HepG2 (cell line): ENCODE measurements at regions of chrX and their contacts with region 1.

Region 1: DNA sequence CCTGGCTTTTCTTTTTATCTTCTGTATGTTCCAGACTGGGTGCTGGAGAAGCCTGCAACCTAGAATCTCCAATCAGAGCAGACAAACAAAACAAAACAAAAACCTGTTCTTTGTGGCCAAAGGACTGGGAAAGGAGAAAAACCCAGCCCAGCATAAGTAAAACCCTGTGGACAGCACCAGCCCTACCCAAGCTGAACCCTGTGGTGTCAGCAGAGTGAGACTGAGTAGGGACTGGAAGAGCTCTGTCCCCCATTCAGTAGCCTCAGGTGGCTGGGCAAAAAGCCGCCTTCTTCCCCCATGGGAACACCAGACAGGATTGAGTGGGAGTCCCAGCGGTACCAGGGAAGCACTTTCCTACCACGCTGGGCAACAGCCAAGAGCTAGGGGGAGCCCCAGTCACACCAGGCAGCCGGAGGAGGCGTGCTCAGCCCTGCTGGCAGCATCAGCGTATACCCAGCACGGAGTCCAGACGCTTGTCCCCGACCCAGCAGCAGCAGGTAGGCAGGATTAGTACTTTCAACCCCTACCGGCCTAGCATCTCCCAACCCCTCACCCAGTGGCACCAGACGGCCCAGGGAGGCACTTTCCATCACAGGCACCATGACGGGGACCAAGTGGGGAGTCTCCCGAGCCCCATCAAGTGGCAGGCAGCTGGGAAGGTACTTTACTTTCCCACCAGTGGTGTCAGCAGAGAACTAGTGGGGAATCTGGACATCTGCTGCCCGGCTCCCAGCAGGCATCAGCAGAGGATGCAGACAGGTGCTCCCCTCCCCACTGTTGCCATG is 8.6 kb upstream of the JADE3 start:
- DNase-seq: peak; percentile 69
- ATAC-seq: peak; percentile 100
- H3K4me3 ChIP-seq: peak overlapping the region; percentile 56 to 77 (median 59); a peak in 5 of 6 replicates
- H3K27ac ChIP-seq: no peak overlapping the region
- H3K4me1 ChIP-seq: 0 out of 2 replicates have a peak, but pooled peaks cover 5% of the 10 kb centered on the region
- H3K27me3 ChIP-seq: no peaks in the 10 kb centered on the region
- CTCF ChIP-seq: peak; percentile 92
- EP300 ChIP-seq: no peak
- POLR2A ChIP-seq: no peak
- RAD21 ChIP-seq: peak; percentile 80

Region 2: DNA sequence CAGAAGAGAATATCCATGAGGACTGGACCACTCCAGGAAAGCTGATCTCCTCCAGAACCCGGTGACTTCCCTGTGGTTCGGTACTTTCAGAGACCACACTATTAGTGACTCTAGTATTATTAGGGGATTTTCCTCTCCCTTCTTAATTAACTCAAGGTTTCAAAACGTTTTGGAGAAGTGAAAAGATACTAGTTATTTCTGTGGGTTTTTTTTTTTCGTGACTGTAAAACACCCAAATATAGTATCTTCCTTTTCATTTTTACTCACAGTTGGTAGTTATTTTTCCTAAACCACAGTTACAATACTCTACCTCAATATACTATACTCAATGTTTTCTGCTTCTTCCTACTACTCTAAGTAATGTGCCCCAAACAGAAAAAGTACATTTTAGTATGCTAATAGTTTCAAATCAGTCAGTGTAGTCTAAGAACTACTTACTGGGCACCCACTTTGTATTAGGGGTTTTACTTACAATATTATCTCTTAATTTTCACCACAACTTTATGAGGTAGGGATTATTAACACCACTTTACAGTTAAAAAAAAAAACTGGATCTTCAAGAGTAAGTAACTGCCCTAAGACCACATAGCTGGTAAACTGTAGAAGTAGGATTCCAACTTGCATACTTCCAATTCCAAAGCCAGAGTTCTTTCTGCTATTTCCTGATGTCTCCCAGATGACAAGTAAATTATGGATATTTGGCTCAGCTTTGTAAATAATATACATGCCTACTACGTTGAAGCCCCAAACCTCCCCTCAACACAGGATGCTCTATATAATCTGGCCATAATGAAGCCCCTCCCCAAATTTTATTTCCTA is 189.8 kb before region 1 on chrX:
- CTCF ChIA-PET with region 1: no interaction called
- POLR2A ChIA-PET with region 1: no interaction called
- in situ Hi-C with region 1: no loop called
- intact Hi-C with region 1: no loop called
- DNase-seq: no peak
- ATAC-seq: no peak
- H3K4me3 ChIP-seq: no peak overlapping the region
- H3K27ac ChIP-seq: no peak overlapping the region
- H3K4me1 ChIP-seq: no peaks in the 10 kb centered on the region
- H3K27me3 ChIP-seq: no peaks in the 10 kb centered on the region
- CTCF ChIP-seq: no peak
- EP300 ChIP-seq: no peak
- POLR2A ChIP-seq: no peak
- RAD21 ChIP-seq: no peak

Region 3: GRCh38 chrX:46796574-46797191 is 107.0 kb before region 1 on chrX:
- CTCF ChIA-PET with region 1: no interaction called
- POLR2A ChIA-PET with region 1: no interaction called
- in situ Hi-C with region 1: no loop called
- intact Hi-C with region 1: no loop called
- DNase-seq: peak; percentile 54
- ATAC-seq: peak; percentile 85
- H3K4me3 ChIP-seq: no peak overlapping the region
- H3K27ac ChIP-seq: no peak overlapping the region
- H3K4me1 ChIP-seq: peaks cover 22% of the 10 kb centered on the region
- H3K27me3 ChIP-seq: no peaks in the 10 kb centered on the region
- CTCF ChIP-seq: peak; percentile 78
- EP300 ChIP-seq: no peak
- POLR2A ChIP-seq: no peak
- RAD21 ChIP-seq: peak; percentile 56

Region 4: DNA sequence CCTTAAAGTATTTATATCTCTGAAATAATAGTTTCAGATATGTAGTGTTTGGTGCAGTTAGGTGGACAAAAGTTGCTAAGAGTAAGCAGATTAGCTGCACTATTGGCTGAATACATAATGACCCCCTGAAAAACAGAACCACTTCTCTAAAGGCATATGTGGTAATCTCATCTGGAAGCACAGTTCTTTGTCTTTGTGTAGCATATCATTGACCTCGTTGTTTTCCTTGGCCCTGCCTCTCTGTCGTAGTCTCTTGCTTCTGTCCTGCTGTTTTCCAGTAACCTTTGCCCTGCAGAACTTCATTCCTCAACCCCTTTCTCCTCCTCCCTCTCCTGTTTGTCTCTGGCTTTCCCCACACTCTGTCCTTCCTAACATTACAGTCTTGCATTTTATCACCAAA is 49.9 kb after region 1 on chrX:
- CTCF ChIA-PET with region 1: no interaction called
- POLR2A ChIA-PET with region 1: no interaction called
- in situ Hi-C with region 1: no loop called
- intact Hi-C with region 1: loop called (anchors 1 kb)
- DNase-seq: peak; percentile 75
- ATAC-seq: peak; percentile 82
- H3K4me3 ChIP-seq: peak overlapping the region in 1 of 3 experiments; percentile 42; a peak in 2 of 6 replicates
- H3K27ac ChIP-seq: peak overlapping the region; percentile 78
- H3K4me1 ChIP-seq: peaks cover 57% of the 10 kb centered on the region
- H3K27me3 ChIP-seq: no peaks in the 10 kb centered on the region
- CTCF ChIP-seq: no peak
- EP300 ChIP-seq: peak in 1 of 2 experiments; percentile 19; a peak in 1 of 4 replicates
- POLR2A ChIP-seq: no peak
- RAD21 ChIP-seq: no peak

Region 5: DNA sequence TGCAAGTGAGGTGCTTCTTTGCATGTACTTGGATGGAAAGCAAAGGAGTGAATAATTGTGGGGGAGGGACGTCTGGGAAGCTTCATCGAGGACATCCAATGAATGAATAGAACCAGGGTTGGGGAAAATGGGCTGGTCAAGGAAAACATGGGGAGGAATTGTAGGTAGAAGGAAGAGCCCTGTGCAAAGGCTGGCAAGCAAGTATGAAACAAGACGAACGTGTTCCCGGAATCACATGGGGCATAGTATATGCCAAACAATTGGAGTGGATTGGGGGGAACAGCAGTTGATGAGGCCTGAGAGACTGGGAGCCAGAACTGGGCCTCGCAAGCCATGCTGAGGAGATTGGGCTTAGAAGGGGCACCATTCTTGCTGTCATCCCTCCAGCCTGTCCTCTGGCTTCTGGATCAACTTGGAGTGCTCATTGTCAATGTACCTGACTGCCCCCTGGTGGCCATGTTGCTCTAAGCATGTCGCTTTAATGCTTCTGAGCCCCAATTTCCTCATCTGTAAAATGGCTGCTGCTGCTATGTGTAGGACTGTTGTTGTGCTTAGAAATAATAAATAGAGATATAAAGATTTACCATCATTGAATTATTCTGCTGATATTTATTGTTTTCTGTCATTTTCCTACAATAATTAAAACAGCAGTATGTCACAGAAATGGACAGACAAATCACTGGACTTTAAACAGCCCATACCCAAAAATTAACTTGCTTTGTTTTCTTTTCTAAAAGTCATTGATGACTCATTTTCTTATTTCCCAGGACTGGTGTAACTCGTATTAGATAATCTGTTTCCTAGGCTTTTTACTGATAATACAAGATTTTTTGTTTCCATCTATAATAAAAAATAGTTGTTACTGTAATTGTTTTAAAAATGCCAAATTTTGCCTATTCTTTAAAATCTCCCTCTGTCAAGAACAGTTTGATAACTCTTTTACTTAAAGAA is 75.0 kb after region 1 on chrX:
- CTCF ChIA-PET with region 1: interaction called, 33 read pairs
- POLR2A ChIA-PET with region 1: no interaction called
- in situ Hi-C with region 1: no loop called
- intact Hi-C with region 1: loop called (anchors 2 kb)
- DNase-seq: peak; percentile 64
- ATAC-seq: peak; percentile 87
- H3K4me3 ChIP-seq: no peak overlapping the region
- H3K27ac ChIP-seq: no peak overlapping the region
- H3K4me1 ChIP-seq: no peaks in the 10 kb centered on the region
- H3K27me3 ChIP-seq: no peaks in the 10 kb centered on the region
- CTCF ChIP-seq: peak; percentile 82
- EP300 ChIP-seq: no peak
- POLR2A ChIP-seq: no peak
- RAD21 ChIP-seq: peak; percentile 62

Region 6: DNA sequence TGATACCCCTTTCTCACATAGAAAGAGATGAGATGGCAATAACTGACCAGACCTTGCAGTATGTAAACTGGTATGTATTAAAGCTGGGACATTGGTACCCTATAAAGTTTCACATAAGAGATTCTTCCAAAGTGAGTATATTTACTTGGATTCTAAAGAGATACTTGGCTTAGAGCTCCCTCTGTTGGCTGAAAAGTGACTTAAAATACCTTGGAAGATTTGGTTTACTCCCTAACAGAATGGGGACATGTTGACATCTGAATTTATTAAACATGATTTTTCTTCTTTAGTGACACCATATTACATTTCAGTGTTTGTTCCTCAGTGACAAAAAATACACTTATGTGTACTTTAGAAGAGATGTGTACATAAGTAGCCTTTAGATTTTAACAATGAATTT is 126.7 kb after region 1 on chrX:
- CTCF ChIA-PET with region 1: interaction called, 13 read pairs
- POLR2A ChIA-PET with region 1: no interaction called
- in situ Hi-C with region 1: no loop called
- intact Hi-C with region 1: loop called (anchors 5 kb)
- DNase-seq: peak; percentile 53
- ATAC-seq: no peak
- H3K4me3 ChIP-seq: no peak overlapping the region
- H3K27ac ChIP-seq: no peak overlapping the region
- H3K4me1 ChIP-seq: no peaks in the 10 kb centered on the region
- H3K27me3 ChIP-seq: no peaks in the 10 kb centered on the region
- CTCF ChIP-seq: peak; percentile 54
- EP300 ChIP-seq: no peak
- POLR2A ChIP-seq: no peak
- RAD21 ChIP-seq: peak; percentile 18; the same call in 1 of the 2 replicates

Region 7: DNA sequence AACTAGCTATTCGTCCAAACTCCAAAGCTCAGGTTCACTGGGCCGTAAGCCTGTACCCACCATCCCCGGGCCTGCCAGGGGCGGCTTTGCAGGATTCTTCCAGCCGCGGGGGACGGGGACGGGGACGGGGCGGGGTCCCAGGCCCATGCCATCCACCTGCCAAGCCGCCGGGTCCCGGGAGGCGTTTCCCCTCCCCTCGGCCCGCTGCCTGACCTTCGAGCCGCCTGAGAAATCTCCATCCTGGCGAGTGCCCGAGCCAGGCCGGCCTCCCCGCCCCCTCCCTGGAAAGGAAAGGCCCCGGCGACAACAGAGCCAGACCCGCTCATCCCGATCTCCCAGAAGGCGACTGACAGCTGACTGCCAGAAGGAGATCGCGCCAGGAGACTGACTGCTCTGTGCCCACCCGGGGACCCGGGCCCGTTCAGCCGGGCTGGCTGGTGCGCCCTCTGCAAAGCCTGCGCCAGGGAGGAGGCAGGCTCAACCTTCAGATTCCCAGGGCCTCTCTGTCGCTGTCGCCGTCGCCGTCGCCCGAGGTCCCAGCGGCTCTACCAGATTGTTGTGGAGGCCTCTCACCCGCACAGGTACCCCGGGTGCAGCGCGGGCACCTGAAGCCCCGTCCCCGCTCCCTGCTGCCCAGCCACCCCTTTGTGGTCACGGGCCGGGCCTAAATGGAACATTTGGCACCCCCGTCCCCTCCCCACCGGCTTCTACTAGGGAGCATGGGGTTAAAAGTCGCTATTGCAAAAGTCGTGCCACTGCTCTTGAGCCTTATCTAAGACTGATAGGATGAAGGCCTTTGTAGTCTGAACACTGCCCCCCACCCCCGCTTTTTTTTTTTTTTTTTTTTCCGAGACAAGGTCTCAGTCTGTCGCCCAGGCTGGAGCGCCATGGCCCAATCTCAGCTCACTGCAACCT is 174.7 kb after region 1 on chrX and contains the start of gene RGN:
- CTCF ChIA-PET with region 1: no interaction called
- POLR2A ChIA-PET with region 1: no interaction called
- in situ Hi-C with region 1: no loop called
- intact Hi-C with region 1: loop called (anchors 5 kb)
- DNase-seq: peak; percentile 81
- ATAC-seq: peak; percentile 69
- H3K4me3 ChIP-seq: peak within 1 kb of the TSS; percentile 59 to 74 (median 68); a peak in 5 of 6 replicates
- H3K27ac ChIP-seq: peak within 1 kb of the TSS; percentile 96
- H3K4me1 ChIP-seq: peaks cover 43% of the 10 kb centered on the region
- H3K27me3 ChIP-seq: no peaks in the 10 kb centered on the region
- CTCF ChIP-seq: no peak
- EP300 ChIP-seq: peak in 1 of 2 experiments; percentile 82; a peak in 1 of 4 replicates
- POLR2A ChIP-seq: peak in 1 of 2 experiments; percentile 58; a peak in 1 of 4 replicates
- RAD21 ChIP-seq: no peak
- total RNA-seq, gene RGN: 74.4 and 76.6 TPM in 2 replicates